ENCODE measurements at regions of chr4 and their contacts with region 1.

Region 1: DNA sequence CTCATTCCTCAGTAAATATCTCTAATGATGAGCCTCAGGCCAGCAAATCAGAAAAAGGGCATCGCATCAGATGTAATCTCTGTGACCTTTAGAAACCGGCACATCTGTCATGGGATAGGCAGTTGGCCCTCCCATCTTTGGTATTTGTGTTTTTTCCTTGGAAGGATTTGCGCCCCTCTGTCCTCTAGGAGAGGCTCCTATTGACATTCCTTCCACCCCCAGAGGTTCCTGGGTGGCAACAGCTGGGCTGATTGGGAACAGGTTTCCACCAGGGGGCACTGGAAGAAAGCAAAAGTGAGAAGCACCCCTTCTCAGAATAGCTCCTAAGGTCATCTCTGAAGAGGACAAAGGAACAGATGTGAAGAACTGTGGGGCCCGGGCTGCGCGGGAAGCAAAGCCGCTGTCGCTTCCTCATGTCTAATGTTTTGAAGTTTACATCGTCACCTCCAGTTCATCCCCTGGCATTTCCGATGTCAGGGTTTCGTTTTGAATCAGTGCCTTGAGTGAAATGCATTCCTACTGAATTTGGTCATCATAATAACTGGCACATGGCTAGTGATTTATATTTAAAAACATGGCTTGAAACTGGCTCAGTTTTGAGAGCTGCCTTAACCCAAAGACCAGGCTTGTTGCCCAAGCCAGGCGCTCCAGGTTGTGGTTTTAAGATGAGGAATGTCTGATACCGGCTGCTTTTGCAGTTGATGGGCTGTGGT is 6.2 kb downstream of the TXK start:
- DNase-seq: peak; percentile 93
- H3K4me3 Mint-ChIP-seq: peak overlapping the region; percentile 78
- H3K27ac Mint-ChIP-seq: peak overlapping the region; percentile 93
- H3K4me1 Mint-ChIP-seq: peaks cover 73% of the 10 kb centered on the region
- H3K27me3 Mint-ChIP-seq: no peaks in the 10 kb centered on the region

Region 2: GRCh38 chr4:47463235-47463956 is 664.4 kb before region 1 on chr4 and contains the start of gene COMMD8:
- intact Hi-C with region 1: loop called (anchors 10 kb)
- DNase-seq: peak; percentile 99
- H3K4me3 Mint-ChIP-seq: peak within 1 kb of the TSS; percentile 88
- H3K27ac Mint-ChIP-seq: peak within 1 kb of the TSS; percentile 77
- H3K4me1 Mint-ChIP-seq: peaks cover 22% of the 10 kb centered on the region
- H3K27me3 Mint-ChIP-seq: no peaks in the 10 kb centered on the region
- total RNA-seq, gene COMMD8: 17.6 and 17.8 TPM in 2 replicates

Region 3: GRCh38 chr4:48016141-48017103 is 111.4 kb before region 1 on chr4 and contains the starts of genes CNGA1 and NIPAL1:
- intact Hi-C with region 1: no loop called
- DNase-seq: peak; percentile 91
- H3K4me3 Mint-ChIP-seq: peak within 1 kb of the TSS; percentile 80
- H3K27ac Mint-ChIP-seq: peak within 1 kb of the TSS; percentile 45
- H3K4me1 Mint-ChIP-seq: peaks cover 20% of the 10 kb centered on the region
- H3K27me3 Mint-ChIP-seq: peaks cover 30% of the 10 kb centered on the region
- total RNA-seq, gene CNGA1: not detected in 2 replicates
- total RNA-seq, gene NIPAL1: 3.6 and 3.8 TPM in 2 replicates

Region 4: DNA sequence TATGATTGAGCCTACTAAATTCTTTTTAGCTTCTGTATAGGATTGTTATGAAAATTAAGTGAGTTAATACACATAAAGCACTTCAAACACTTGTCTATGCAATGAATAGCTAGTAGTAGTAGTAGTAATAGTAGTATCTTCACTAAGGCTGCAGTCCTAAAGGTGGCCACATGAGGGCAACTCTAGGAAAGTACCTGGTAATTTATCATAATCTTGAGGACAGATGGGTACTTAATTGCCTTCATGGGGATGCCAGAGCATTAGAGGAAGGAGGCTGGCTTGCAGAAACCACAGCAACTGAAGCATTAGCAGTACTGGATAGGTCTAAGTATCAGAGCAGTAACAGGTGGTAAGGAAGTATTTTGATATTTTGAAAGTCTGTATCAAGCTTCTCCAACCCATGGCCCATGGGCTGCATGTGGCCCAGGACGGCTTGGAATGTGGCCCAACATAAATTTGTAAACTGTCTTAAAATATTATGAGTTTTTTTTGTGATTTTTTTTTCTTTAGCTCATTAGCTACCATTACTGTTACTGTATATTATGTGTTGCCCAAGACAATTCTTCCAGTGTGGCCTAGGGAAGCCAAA is 93.9 kb before region 1 on chr4:
- intact Hi-C with region 1: loop called (anchors 2 kb)
- DNase-seq: peak; percentile 87
- H3K4me3 Mint-ChIP-seq: no peak overlapping the region
- H3K27ac Mint-ChIP-seq: no peak overlapping the region
- H3K4me1 Mint-ChIP-seq: peaks cover 24% of the 10 kb centered on the region
- H3K27me3 Mint-ChIP-seq: peaks cover 2% of the 10 kb centered on the region

Region 5: DNA sequence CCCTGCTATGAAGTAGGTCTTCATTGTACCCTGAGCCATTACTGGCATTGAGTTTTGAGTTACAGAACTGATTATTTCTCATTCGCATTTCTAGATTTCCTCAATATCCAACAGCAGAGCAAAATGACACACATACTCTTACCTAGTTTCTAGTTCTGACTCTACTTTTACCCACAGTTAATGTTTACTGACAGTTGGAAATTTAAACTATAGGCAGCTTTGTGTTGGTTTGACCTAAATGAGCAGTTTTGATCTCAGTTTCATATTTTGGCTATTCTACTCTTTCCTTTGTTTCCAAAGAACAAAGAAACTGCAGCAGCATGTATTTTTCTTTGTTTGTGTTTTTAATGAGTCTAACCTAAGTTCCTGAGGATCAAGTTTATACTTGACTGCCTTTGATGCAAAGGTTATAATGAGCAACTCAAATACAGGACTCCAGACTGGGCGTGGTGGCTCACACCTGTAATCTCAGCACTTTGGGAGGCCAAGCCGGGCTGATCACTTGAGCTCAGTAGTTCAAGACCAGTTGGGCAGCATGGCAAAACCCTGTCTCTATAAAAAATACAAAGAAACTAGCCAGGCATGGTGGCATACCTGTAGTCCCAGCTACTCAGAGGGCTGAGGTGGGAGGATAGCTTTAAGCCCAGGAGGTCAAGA is 24.2 kb before region 1 on chr4:
- intact Hi-C with region 1: loop called (anchors 1 kb)
- DNase-seq: peak; percentile 51
- H3K4me3 Mint-ChIP-seq: no peak overlapping the region
- H3K27ac Mint-ChIP-seq: peak overlapping the region; percentile 63
- H3K4me1 Mint-ChIP-seq: peaks cover 16% of the 10 kb centered on the region
- H3K27me3 Mint-ChIP-seq: no peaks in the 10 kb centered on the region

Region 6: DNA sequence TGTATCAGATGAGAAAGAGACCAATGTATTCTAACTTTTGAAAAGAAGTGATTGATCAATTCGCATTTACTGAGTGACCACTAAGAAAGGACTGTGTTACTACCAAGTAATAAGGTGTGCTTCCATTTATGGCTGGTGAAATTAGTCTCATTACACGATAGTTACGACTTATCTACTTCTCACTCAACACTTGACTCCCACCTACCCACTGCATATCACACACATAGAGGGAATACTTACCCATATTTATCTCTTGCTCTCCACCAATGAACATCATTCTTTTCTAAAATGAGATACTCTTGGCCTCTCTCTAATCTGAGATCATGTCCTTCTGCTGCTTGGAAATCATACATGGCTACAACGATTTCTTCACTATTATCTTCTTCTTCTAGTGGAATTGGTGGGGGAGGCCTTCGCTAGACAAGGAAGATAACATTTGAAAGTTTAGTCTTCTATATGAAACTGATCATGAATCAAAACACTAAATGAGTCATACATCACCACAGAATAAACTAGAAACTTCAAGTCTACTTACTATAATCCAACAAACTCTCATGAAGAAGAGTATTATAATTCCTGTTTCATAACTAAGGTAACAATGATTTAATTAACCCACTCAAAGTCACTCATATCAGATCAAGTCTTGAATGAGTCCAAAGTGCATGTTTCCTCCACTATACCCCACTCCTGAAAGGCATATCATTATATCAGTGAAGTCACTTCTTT is 39.9 kb after region 1 on chr4:
- intact Hi-C with region 1: loop called (anchors 5 kb)
- DNase-seq: no peak
- H3K4me3 Mint-ChIP-seq: no peak overlapping the region
- H3K27ac Mint-ChIP-seq: peak overlapping the region; percentile 8
- H3K4me1 Mint-ChIP-seq: peaks cover 9% of the 10 kb centered on the region
- H3K27me3 Mint-ChIP-seq: no peaks in the 10 kb centered on the region

Region 7: GRCh38 chr4:48340965-48341775 is 213.3 kb after region 1 on chr4 and contains the start of gene SLAIN2:
- intact Hi-C with region 1: loop called (anchors 2 kb)
- DNase-seq: peak; percentile 100
- H3K4me3 Mint-ChIP-seq: peak within 1 kb of the TSS; percentile 100
- H3K27ac Mint-ChIP-seq: peak within 1 kb of the TSS; percentile 98
- H3K4me1 Mint-ChIP-seq: peaks cover 55% of the 10 kb centered on the region
- H3K27me3 Mint-ChIP-seq: no peaks in the 10 kb centered on the region
- total RNA-seq, gene SLAIN2: 77.6 and 80.2 TPM in 2 replicates

Region 8: DNA sequence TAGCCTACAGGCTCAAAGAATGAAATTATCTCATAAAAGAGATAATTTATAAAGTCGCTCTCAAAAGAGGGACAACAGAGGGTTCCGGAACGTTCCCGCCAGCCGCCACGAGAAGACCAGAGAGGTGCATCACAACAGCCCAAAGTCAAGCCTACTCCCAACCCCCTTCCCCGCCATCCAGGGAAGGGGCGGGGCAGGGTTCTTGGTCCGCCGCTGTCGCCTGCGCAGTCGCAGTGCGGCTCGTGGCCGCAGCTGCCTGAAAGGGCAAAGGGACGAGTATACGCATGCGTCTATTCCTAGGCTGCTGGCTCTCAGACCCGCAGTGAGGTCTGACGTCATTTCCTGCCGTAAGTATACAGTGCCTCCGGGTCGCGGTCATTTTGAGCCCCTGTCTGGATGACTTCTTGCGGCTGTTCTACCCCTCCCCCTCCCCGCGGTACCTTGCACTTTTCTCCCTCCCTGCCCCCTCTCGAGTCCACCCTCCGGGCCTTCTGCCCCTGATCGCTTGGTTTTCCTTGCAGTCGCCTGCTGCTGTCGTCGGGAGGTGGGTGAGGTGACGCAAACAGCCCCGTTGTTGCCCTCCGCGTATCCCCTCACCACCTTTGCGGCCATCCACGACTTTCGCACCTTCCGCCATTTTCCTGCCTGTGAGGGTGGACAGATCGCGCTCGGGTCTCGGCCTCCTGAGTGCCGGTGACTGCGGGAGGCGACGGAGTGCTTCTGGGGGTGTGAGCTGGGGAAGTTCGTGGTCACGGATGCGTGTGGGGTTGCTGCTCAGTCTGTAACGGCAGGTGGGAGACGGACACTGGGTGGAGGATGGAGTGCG is 703.1 kb after region 1 on chr4 and contains the start of gene OCIAD1:
- intact Hi-C with region 1: loop called (anchors 5 kb)
- DNase-seq: peak; percentile 98
- H3K4me3 Mint-ChIP-seq: peak within 1 kb of the TSS; percentile 97
- H3K27ac Mint-ChIP-seq: peak within 1 kb of the TSS; percentile 100
- H3K4me1 Mint-ChIP-seq: peaks cover 20% of the 10 kb centered on the region
- H3K27me3 Mint-ChIP-seq: peaks cover 2% of the 10 kb centered on the region
- total RNA-seq, gene OCIAD1: 116 and 130 TPM in 2 replicates